Breast epithelium (tissue), 4 donors: ENCODE measurements at regions of chr5 and their contacts with region 1.

Region 1: GRCh38 chr5:96384353-96384752 is 48.7 kb downstream of the PCSK1 start:
- DNase-seq: peak in 1 of 2 donors; percentile 40
- H3K4me3 ChIP-seq: no peak overlapping the region
- H3K27ac ChIP-seq: no peak overlapping the region
- H3K4me1 ChIP-seq: no peaks in the 10 kb centered on the region
- H3K27me3 ChIP-seq: no peaks in the 10 kb centered on the region
- CTCF ChIP-seq: no peak
- POLR2A ChIP-seq: no peak

Region 2: GRCh38 chr5:96326902-96327301 is 57.5 kb before region 1 on chr5:
- intact Hi-C with region 1: no loop called
- DNase-seq: no peak
- H3K4me3 ChIP-seq: no peak overlapping the region
- H3K27ac ChIP-seq: no peak overlapping the region
- H3K4me1 ChIP-seq: no peaks in the 10 kb centered on the region
- H3K27me3 ChIP-seq: no peaks in the 10 kb centered on the region
- CTCF ChIP-seq: no peak
- POLR2A ChIP-seq: no peak

Region 3: DNA sequence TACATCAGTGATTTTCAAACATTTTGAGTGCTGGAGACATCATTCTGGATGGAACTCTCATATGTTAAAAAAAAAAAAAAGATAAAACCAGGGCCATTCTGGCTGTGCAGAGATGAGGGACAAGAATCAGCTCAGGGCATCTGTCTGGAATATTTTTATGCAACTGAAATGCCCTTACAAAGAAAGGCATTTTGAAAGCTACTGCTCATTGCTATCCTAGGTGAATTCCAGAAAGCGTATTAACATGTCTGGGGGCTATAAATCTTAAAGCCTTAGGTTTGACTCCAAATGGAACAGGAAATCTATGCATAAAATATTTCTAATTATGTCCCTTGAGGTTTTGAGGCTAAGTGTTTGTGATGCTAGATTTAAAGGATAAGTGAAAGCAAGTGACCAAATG is 63.6 kb after region 1 on chr5:
- intact Hi-C with region 1: loop called (anchors 2 kb)
- DNase-seq: no peak
- H3K4me3 ChIP-seq: no peak overlapping the region
- H3K27ac ChIP-seq: no peak overlapping the region
- H3K4me1 ChIP-seq: no peaks in the 10 kb centered on the region
- H3K27me3 ChIP-seq: no peaks in the 10 kb centered on the region
- CTCF ChIP-seq: no peak
- POLR2A ChIP-seq: no peak